Left cardiac atrium (tissue), 4 donors: ENCODE measurements at regions of chr16 and their contacts with region 1.

Region 1: DNA sequence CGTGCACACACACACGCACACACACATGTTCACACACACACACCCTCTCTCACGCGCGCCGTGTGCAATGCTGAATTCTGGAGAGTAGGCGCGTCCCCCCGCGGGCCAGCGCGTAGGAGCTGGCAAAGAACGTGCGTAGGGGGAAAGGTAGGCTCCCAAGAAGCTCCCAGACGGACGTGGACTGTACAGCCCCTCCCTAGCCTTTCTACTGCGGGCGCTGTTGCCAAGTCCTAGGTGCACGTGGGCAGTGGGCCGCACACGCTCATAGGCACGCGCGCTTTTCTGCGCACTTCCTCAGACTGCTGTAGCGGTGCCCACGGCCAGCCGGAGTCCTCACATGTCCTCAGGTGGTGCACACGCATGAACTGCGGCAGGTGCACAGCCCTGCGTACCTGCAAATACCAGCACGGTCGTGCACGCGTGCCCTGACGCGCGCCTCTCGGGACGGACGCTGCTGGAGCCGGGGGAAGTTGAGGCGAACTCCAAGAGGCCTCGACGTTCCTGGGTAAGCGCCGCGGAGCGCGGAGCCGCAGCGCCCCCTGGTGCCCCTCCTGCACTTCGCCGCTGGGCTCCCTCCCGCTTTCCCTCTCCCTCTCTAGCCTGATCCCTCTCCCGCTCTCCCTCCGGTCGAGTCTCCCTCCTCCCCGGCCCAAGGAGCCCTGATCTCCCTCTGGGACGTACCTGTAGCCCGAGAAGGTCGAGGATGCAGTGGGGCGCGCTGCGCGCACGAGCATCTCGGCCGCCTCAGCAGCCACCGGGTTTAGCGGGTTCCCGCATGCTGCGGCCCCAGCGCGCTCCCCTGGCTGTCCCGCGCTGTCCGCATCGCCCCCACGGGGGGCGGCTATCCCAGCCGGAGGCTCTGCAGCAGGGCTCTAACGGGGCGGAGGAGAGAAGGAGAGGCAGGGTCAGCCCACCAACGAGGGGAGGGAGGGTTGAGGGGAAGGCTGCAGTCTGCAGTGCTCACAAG is 749 bp downstream of the GRIN2A start:
- DNase-seq: peak; percentile 65
- ATAC-seq: peak; percentile 92 to 96

Region 2: GRCh38 chr16:9159839-9160550 is 1021.5 kb before region 1 on chr16:
- intact Hi-C with region 1: loop called in 1 of 2 experiments (anchors 10 kb)
- DNase-seq: peak; percentile 30
- ATAC-seq: peak; percentile 38 to 81

Region 3: DNA sequence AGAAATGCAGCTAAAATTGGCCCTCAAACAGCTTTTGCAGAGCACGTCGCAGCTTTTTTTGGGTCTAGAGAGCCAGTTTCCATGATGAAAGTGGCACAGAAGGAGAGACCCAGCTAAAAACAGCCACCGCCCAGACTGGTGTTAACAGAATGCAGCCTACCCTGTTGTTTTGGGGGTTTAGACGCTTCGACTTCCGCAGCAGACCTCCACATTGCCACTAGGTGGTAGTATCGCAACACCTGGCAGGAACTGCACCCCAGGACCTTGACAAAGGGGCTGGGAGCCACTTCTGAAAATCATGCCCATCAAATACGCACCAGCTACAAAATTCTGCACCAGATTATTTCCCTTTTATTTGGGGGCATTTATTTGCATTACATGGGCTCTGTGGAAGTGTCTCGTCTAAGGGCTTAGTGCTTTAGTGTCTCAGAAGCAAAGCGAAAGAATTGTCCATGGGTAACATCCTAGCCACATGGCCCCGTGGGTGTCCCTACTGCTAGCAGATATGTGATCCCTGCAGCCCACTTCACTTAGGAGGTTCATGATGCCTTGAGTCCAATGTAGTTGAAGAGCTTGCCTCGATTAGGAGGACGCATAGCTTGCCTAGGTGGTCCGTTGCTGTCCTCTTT is 922.9 kb before region 1 on chr16:
- intact Hi-C with region 1: loop called (anchors 5 to 10 kb)
- DNase-seq: peak; percentile 31
- ATAC-seq: peak; percentile 57 to 59

Region 4: GRCh38 chr16:9647981-9648712 is 533.3 kb before region 1 on chr16:
- intact Hi-C with region 1: loop called (anchors 5 to 10 kb)
- DNase-seq: no peak
- ATAC-seq: peak; percentile 53 to 77

Region 5: GRCh38 chr16:9929313-9929712 is 252.2 kb before region 1 on chr16:
- intact Hi-C with region 1: no loop called
- DNase-seq: no peak
- ATAC-seq: no peak

Region 6: GRCh38 chr16:10039220-10040096 is 142.0 kb before region 1 on chr16:
- intact Hi-C with region 1: loop called in 1 of 2 experiments (anchors 10 kb)
- DNase-seq: peak; percentile 27
- ATAC-seq: peak; percentile 74 to 82

Region 7: DNA sequence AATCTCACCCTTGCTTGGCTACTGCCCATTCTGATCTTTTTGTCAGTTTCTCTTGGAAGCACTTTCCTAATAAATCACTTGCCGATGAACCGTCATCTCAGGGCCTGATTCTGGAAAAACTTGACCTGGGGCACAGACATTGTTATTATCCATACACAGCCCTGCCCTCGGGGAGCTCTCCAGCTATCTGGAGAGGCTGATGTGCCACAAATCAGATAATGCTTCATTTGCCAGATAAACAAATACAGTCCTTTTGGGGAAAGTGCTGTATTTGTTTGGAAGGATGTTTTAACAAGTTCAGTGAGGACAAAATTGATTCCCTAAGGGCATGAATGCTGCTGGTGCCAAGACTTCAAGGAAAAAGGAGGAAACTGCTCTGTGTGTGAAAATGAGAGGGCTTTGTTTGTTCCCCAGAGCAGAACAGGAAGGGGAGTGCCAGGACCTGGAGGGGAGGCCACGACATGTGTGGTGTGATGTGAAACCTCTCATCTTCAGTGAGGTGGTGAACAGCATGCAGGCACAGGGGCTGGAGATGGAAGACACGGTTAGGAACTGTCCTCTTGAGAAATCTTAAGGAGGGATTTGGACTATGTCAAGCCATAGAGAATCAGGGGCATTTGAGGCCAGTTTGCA is 47.2 kb after region 1 on chr16:
- intact Hi-C with region 1: no loop called
- DNase-seq: no peak
- ATAC-seq: no peak

Region 8: GRCh38 chr16:10256784-10257641 is 75.5 kb after region 1 on chr16:
- intact Hi-C with region 1: no loop called
- DNase-seq: peak; percentile 40
- ATAC-seq: peak; percentile 63 to 64